GM18951 (cell line): ENCODE measurements at regions of chr1 and their contacts with region 1.

Region 1: DNA sequence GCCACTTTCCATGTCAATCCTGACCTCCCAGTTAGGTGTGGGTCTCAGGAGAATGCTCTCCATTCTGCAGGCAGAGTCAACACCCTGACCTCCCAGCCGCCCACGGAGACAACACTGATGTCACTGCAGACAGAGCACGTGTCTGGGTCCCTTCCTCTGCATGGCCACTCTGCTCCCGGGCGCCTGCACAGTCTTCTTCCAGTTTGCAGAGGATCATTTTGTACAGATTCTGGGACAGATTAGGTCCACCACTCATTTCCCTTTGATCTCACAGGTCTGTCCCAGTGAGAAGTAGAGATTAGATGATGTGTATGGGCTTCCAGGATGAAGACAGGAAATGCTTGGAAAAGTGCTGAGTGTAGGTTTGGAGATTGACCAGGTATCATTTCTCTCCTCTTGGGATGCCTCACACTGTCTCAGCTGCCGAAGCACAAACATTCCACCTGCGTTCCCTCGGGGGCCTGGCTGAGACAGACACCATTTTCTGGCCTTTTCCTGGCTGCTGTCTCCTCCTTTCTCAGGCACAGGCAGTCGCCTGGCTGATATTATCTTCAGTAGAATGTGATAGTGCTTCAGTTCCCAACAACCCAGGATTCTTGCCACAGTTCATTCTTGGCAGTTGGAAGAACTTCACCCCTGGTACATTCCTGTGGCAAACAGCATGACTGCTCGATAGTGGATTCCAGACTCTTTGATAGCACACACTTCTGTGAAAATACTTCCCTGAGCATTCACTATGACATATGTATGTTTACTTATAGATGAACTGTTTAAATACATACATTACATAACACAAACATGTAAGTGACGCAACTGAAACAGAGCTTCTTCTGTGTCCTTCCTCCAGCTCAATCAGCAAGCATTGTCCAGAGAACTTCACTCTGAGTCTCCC is 7.9 kb downstream of the MYBPHL start:
- POLR2A ChIP-seq: no peak

Region 2: GRCh38 chr1:109151164-109151990 is 147.5 kb before region 1 on chr1:
- in situ Hi-C with region 1: no loop called
- POLR2A ChIP-seq: no peak

Region 3: GRCh38 chr1:109361649-109362048 is 62.7 kb after region 1 on chr1:
- in situ Hi-C with region 1: loop called (anchors 5 kb)
- POLR2A ChIP-seq: no peak

Region 4: DNA sequence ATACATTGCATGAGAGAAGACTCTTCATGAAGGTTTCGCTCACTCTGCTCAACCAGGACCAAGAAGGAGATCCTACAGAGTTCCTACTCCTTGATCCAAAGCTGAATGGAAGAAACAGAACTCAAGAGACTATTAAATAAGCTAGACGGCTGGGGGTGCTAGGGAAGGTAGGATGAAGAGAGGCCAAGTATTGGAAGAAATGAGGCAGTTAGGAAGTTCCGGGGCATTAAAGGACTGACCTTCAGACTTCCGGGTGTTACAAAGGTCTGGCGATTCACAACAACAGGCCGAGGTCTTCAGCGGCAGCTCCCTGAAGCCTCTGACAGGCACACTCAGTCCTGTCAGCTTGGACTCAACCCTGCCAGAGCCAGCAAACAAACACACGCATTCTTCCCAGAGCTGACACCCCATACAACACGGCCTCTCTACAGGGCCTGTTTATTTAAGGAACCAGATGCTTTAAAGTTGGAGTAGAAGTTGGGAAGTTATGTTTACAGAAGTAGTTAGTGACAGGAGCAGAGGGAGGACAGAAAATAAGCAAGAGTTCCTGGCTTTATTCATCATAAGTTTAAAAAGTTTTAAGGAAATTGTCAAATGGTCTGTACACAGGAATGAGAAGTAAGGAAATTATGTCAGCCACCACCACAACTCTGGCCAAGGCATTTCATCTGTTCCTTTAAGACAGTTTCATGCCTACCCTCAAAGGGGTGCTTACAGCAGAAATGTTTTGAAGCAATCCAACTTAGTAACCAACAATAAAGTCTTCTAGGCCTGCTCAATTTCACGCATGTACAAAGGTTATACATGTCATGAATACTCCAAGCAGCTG is 94.1 kb after region 1 on chr1:
- in situ Hi-C with region 1: no loop called
- POLR2A ChIP-seq: no peak

Region 5: GRCh38 chr1:109807822-109808680 is 509.1 kb after region 1 on chr1:
- in situ Hi-C with region 1: no loop called
- POLR2A ChIP-seq: no peak